GM12878 (cell line): ENCODE measurements at regions of chr16 and their contacts with region 1.

Region 1: GRCh38 chr16:11715246-11715947 is 27.3 kb downstream of the TXNDC11 start:
- DNase-seq: no peak
- ATAC-seq: peak; percentile 80
- H3K4me3 ChIP-seq: no peak overlapping the region
- H3K27ac ChIP-seq: peak overlapping the region; percentile 48; the same call in 1 of the 2 replicates
- H3K4me1 ChIP-seq: peaks cover 16% of the 10 kb centered on the region
- H3K27me3 ChIP-seq: no peaks in the 10 kb centered on the region
- CTCF ChIP-seq: 0 out of 6 replicates have a peak, but pooled peaks of 1 of the 3 experiments have one; percentile 3
- EP300 ChIP-seq: no peak
- POLR2A ChIP-seq: no peak
- RAD21 ChIP-seq: peak; percentile 36

Region 2: DNA sequence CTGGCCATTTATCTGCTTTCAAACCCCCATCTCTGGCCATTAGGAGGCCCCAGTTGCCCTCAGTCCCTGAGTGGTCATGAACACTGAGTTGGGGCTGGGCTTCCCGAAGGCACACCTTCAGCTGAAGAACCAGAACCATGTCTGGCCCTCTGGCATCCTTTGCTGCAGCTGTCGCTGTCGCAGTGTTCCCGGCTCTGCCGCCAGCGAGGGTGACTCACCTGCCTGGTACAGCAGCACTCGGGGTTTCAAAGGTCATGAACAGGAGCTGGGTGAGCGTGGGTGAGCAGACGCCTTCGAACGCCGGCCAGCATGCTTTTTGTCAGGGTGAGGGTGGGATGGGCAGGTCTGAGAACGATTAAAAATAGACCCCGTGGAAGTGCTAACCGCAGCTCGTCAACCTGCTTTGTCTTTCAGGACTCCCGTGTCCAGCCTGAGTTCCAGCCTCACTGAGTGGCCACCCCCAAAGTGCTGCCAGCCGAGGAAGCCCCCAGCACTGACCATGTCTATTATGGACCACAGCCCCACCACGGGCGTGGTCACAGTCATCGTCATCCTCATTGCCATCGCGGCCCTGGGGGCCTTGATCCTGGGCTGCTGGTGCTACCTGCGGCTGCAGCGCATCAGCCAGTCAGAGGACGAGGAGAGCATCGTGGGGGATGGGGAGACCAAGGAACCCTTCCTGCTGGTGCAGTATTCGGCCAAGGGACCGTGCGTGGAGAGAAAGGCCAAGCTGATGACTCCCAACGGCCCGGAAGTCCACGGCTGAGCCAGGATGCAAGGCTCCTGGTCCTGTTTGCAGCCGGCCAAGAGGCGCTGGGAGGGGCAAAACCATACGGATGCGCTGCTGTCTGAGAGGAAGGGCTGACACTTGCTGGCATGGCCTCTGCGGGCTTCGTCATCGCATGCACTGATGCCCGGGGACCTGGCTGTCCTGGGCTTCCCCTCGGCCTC is 39.6 kb before region 1 on chr16:
- CTCF ChIA-PET with region 1: interaction called, 14 read pairs
- POLR2A ChIA-PET with region 1: no interaction called
- RAD21 ChIA-PET with region 1: interaction called, 4 read pairs
- SMC1A ChIA-PET with region 1: interaction called, 41 read pairs
- in situ Hi-C with region 1: no loop called
- intact Hi-C with region 1: no loop called
- DNase-seq: no peak
- ATAC-seq: no peak
- H3K4me3 ChIP-seq: no peak overlapping the region
- H3K27ac ChIP-seq: no peak overlapping the region
- H3K4me1 ChIP-seq: peaks cover 71% of the 10 kb centered on the region
- H3K27me3 ChIP-seq: no peaks in the 10 kb centered on the region
- CTCF ChIP-seq: no peak
- EP300 ChIP-seq: no peak
- POLR2A ChIP-seq: 0 out of 2 replicates have a peak, but pooled peaks have one; percentile 2
- RAD21 ChIP-seq: no peak

Region 3: DNA sequence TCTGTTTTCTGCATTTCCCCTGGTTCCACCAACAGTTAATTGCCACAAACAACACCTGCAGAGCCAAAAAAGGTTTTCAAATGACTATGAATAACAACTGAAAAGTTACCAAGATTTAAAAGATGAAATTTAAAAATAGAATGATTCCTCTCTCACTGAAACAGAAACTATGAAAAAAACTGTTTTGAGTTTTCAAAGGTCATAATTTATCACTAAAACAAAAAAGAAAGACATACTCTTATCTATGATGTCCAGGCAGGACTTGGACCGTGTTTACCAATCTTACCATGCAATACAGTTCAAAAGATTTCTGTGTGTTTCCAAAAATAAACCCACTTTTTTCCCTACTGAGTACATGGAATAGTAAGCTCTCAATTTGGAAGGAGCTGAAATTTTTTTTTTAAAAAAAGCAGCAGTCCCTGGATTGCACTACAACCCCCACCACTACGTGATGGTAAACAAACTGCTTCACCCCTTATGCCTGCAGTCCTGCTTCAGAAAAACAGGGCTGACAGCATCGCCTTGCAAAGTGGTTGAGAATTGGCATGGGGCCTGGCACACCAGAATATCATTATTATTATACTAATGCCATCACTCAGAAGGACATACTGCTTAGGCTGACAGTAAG is 18.7 kb after region 1 on chr16:
- CTCF ChIA-PET with region 1: interaction called, 18 read pairs
- POLR2A ChIA-PET with region 1: interaction called, 4 read pairs
- RAD21 ChIA-PET with region 1: interaction called, 6 read pairs
- SMC1A ChIA-PET with region 1: interaction called, 12 read pairs
- in situ Hi-C with region 1: no loop called
- intact Hi-C with region 1: no loop called
- DNase-seq: no peak
- ATAC-seq: peak; percentile 47
- H3K4me3 ChIP-seq: peak overlapping the region; percentile 22
- H3K27ac ChIP-seq: peak overlapping the region; percentile 74
- H3K4me1 ChIP-seq: peaks cover 56% of the 10 kb centered on the region
- H3K27me3 ChIP-seq: no peaks in the 10 kb centered on the region
- CTCF ChIP-seq: no peak
- EP300 ChIP-seq: peak; percentile 38 to 73; a peak in 2 of 4 replicates
- POLR2A ChIP-seq: no peak
- RAD21 ChIP-seq: no peak